OCI-LY7 (cell line): ENCODE measurements at regions of chr11 and their contacts with region 1.

Region 1: GRCh38 chr11:116972691-116973090 is 125.5 kb downstream of the SIK3 start:
- DNase-seq: no peak
- H3K4me3 ChIP-seq: no peak overlapping the region
- H3K27ac ChIP-seq: no peak overlapping the region
- H3K4me1 ChIP-seq: no peaks in the 10 kb centered on the region
- CTCF ChIP-seq: no peak

Region 2: GRCh38 chr11:116481126-116481644 is 491.5 kb before region 1 on chr11:
- CTCF ChIA-PET with region 1: no interaction called
- POLR2A ChIA-PET with region 1: no interaction called
- intact Hi-C with region 1: no loop called
- DNase-seq: no peak
- H3K4me3 ChIP-seq: no peak overlapping the region
- H3K27ac ChIP-seq: no peak overlapping the region
- H3K4me1 ChIP-seq: no peaks in the 10 kb centered on the region
- CTCF ChIP-seq: no peak

Region 3: GRCh38 chr11:116910847-116911246 is 61.8 kb before region 1 on chr11:
- CTCF ChIA-PET with region 1: no interaction called
- POLR2A ChIA-PET with region 1: interaction called, 15 read pairs
- intact Hi-C with region 1: no loop called
- DNase-seq: no peak
- H3K4me3 ChIP-seq: no peak overlapping the region
- H3K27ac ChIP-seq: no peak overlapping the region
- H3K4me1 ChIP-seq: peaks cover 12% of the 10 kb centered on the region
- CTCF ChIP-seq: no peak

Region 4: GRCh38 chr11:116960930-116961329 is 11.8 kb before region 1 on chr11:
- CTCF ChIA-PET with region 1: no interaction called
- POLR2A ChIA-PET with region 1: interaction called, 73 read pairs
- intact Hi-C with region 1: no loop called
- DNase-seq: peak; percentile 14
- H3K4me3 ChIP-seq: no peak overlapping the region
- H3K27ac ChIP-seq: no peak overlapping the region
- H3K4me1 ChIP-seq: peaks cover 67% of the 10 kb centered on the region
- CTCF ChIP-seq: no peak